Activated CD8-positive, alpha-beta T cell treated with anti-CD3 and anti-CD28 coated beads, Interleukin-2, amount 10 ng/mL, durations not matched to agents 7 days and 5 days (primary cell): ENCODE measurements at regions of chr4 and their contacts with region 1.

Region 1: GRCh38 chr4:73258686-73259570 is at the start of gene ANKRD17:
- DNase-seq: peak; percentile 93
- ATAC-seq: peak; percentile 79
- H3K4me3 Mint-ChIP-seq: peak within 1 kb of the TSS; percentile 99
- H3K27ac Mint-ChIP-seq: peak within 1 kb of the TSS; percentile 100
- H3K4me1 Mint-ChIP-seq: peaks cover 47% of the 10 kb centered on the region
- H3K27me3 Mint-ChIP-seq: no peaks in the 10 kb centered on the region
- total RNA-seq, gene ANKRD17: 45.8 to 46.6 TPM

Region 2: GRCh38 chr4:73036123-73036522 is 222.8 kb before region 1 on chr4:
- CTCF ChIA-PET with region 1: interaction called, 13 read pairs
- POLR2A ChIA-PET with region 1: no interaction called
- DNase-seq: no peak
- ATAC-seq: no peak
- H3K4me3 Mint-ChIP-seq: no peak overlapping the region
- H3K27ac Mint-ChIP-seq: no peak overlapping the region
- H3K4me1 Mint-ChIP-seq: peaks cover 16% of the 10 kb centered on the region
- H3K27me3 Mint-ChIP-seq: no peaks in the 10 kb centered on the region

Region 3: DNA sequence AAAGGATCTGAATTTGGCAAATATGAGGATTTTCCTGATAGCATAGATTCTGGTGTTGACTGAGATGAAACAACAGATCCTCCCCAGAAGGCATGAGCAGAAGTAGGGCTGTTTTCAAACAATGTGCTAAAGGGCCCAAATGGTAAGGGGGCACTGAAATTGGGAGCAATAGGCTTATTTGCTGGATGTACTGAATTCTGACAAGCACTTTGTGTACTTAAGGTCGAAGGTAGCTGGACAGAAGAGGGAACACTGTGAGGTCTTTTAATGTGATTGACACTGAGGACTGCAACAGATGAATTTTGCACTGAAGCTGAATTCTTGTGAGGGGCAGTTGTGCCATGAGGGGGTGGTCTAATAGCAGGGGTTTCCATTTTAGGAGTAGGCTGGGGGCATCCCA is 168.2 kb before region 1 on chr4:
- CTCF ChIA-PET with region 1: interaction called, 11 read pairs
- POLR2A ChIA-PET with region 1: interaction called, 4 read pairs
- DNase-seq: no peak
- ATAC-seq: no peak
- H3K4me3 Mint-ChIP-seq: no peak overlapping the region
- H3K27ac Mint-ChIP-seq: peak overlapping the region; percentile 26
- H3K4me1 Mint-ChIP-seq: peaks cover 7% of the 10 kb centered on the region
- H3K27me3 Mint-ChIP-seq: no peaks in the 10 kb centered on the region

Region 4: GRCh38 chr4:73142995-73143547 is 115.9 kb before region 1 on chr4:
- CTCF ChIA-PET with region 1: interaction called, 15 read pairs
- POLR2A ChIA-PET with region 1: interaction called, 3 read pairs
- DNase-seq: no peak
- ATAC-seq: no peak
- H3K4me3 Mint-ChIP-seq: no peak overlapping the region
- H3K27ac Mint-ChIP-seq: no peak overlapping the region
- H3K4me1 Mint-ChIP-seq: no peaks in the 10 kb centered on the region
- H3K27me3 Mint-ChIP-seq: no peaks in the 10 kb centered on the region

Region 5: DNA sequence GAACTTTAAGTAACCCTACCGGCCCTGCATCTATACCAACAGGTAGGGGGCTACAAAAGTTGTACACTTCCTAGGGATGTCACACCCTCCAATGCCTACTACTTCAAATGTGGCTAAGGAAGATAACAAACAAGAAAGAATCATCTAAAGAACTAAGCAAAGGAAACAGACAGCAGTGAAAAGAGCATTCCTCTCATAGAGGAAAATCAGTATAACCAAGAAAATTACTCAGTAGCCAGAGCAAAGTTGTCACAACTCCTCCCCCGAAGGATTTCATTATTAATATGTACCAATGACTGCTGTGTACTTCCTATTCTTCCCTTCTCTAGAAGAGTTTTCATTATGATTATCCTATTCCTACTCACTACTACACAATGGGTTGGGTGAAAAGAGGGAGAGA is 13.0 kb before region 1 on chr4:
- CTCF ChIA-PET with region 1: interaction called, 17 read pairs
- POLR2A ChIA-PET with region 1: interaction called, 4 read pairs
- DNase-seq: no peak
- ATAC-seq: no peak
- H3K4me3 Mint-ChIP-seq: no peak overlapping the region
- H3K27ac Mint-ChIP-seq: no peak overlapping the region
- H3K4me1 Mint-ChIP-seq: peaks cover 23% of the 10 kb centered on the region
- H3K27me3 Mint-ChIP-seq: no peaks in the 10 kb centered on the region

Region 6: GRCh38 chr4:73508651-73509050 is 249.7 kb after region 1 on chr4:
- CTCF ChIA-PET with region 1: no interaction called
- POLR2A ChIA-PET with region 1: no interaction called
- DNase-seq: no peak
- ATAC-seq: no peak
- H3K4me3 Mint-ChIP-seq: no peak overlapping the region
- H3K27ac Mint-ChIP-seq: no peak overlapping the region
- H3K4me1 Mint-ChIP-seq: no peaks in the 10 kb centered on the region
- H3K27me3 Mint-ChIP-seq: no peaks in the 10 kb centered on the region